ENCODE measurements at regions of chr5 and their contacts with region 1.

Region 1: GRCh38 chr5:73902327-73903051 is 276.5 kb downstream of the ARHGEF28 start:
- DNase-seq: no peak
- H3K4me3 ChIP-seq: no peak overlapping the region
- H3K27ac ChIP-seq: no peak overlapping the region
- H3K4me1 ChIP-seq: no peaks in the 10 kb centered on the region
- H3K27me3 ChIP-seq: no peaks in the 10 kb centered on the region
- CTCF ChIP-seq: peak; percentile 64 to 93 (median 83)
- POLR2A ChIP-seq: no peak

Region 2: GRCh38 chr5:73654171-73654811 is 248.2 kb before region 1 on chr5:
- intact Hi-C with region 1: no loop called
- DNase-seq: no peak
- H3K4me3 ChIP-seq: no peak overlapping the region
- H3K27ac ChIP-seq: no peak overlapping the region
- H3K4me1 ChIP-seq: peaks cover 9 to 12% of the 10 kb centered on the region in 2 donors
- H3K27me3 ChIP-seq: no peaks in the 10 kb centered on the region
- CTCF ChIP-seq: no peak
- POLR2A ChIP-seq: no peak

Region 3: DNA sequence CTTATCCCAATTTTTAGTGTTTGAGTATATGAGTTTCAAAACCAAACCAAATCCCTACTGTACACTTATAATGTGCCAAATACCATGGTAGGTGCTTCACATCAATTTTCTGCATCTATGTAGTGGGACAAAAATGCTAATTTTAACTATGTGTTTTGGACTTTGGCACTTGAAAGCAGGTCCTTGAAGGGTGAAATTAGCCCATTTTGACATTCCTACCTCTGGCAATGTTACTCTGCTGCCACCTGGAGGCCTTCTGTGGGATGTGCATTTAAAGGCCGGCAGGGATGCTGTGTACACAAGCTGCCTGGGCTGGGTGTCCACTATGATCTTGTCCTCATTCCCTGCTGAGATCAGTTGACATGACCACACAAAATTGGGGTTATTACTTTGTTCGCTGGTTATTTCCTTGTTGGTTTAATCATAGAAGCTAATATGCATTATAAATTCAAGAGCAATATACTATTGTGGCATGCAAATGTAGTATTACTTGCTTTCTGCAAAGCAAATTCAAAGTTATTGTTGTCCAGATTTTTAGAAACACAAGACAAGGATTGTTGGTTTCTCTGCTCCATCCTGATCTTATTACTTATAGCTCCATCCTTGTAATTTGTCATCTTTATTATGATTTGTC is 109.7 kb before region 1 on chr5:
- intact Hi-C with region 1: no loop called
- DNase-seq: peak; percentile 78
- H3K4me3 ChIP-seq: no peak overlapping the region
- H3K27ac ChIP-seq: no peak overlapping the region
- H3K4me1 ChIP-seq: peaks cover 7 to 16% of the 10 kb centered on the region in 2 donors
- H3K27me3 ChIP-seq: no peaks in the 10 kb centered on the region
- CTCF ChIP-seq: peak; percentile 91 to 99 (median 97)
- POLR2A ChIP-seq: no peak

Region 4: GRCh38 chr5:73960023-73960422 is 57.5 kb after region 1 on chr5:
- intact Hi-C with region 1: no loop called
- DNase-seq: no peak
- H3K4me3 ChIP-seq: no peak overlapping the region
- H3K27ac ChIP-seq: no peak overlapping the region
- H3K4me1 ChIP-seq: no peaks in the 10 kb centered on the region
- H3K27me3 ChIP-seq: no peaks in the 10 kb centered on the region
- CTCF ChIP-seq: no peak
- POLR2A ChIP-seq: no peak

Region 5: DNA sequence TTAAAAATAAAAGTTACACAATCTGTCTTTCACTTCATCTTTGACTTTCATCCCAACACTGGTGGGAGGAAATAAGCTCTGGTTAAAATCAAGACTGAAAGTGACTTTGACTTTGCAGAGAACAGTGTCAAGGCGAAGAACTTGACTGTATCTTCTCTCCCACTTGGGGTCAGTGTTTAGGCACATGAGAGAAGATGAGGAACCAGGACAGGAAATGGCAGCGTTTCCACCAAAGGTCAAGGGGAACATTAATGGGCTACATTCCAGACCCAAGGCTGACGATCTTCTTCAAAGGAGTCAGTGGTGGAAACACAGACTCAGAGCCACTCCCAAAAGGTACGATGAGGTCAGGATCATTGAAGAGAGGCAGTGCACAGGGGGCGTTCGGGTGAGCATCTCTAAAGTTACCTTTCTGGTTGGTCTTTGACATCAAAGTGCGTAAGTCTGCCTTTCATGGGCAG is 133.1 kb after region 1 on chr5:
- intact Hi-C with region 1: loop called (anchors 10 kb)
- DNase-seq: peak; percentile 24 to 25
- H3K4me3 ChIP-seq: no peak overlapping the region
- H3K27ac ChIP-seq: no peak overlapping the region
- H3K4me1 ChIP-seq: peaks cover 11 to 19% of the 10 kb centered on the region in 2 donors
- H3K27me3 ChIP-seq: no peaks in the 10 kb centered on the region
- CTCF ChIP-seq: peak in 4 of 6 experiments; percentile 21 to 66 (median 44)
- POLR2A ChIP-seq: no peak

Region 6: DNA sequence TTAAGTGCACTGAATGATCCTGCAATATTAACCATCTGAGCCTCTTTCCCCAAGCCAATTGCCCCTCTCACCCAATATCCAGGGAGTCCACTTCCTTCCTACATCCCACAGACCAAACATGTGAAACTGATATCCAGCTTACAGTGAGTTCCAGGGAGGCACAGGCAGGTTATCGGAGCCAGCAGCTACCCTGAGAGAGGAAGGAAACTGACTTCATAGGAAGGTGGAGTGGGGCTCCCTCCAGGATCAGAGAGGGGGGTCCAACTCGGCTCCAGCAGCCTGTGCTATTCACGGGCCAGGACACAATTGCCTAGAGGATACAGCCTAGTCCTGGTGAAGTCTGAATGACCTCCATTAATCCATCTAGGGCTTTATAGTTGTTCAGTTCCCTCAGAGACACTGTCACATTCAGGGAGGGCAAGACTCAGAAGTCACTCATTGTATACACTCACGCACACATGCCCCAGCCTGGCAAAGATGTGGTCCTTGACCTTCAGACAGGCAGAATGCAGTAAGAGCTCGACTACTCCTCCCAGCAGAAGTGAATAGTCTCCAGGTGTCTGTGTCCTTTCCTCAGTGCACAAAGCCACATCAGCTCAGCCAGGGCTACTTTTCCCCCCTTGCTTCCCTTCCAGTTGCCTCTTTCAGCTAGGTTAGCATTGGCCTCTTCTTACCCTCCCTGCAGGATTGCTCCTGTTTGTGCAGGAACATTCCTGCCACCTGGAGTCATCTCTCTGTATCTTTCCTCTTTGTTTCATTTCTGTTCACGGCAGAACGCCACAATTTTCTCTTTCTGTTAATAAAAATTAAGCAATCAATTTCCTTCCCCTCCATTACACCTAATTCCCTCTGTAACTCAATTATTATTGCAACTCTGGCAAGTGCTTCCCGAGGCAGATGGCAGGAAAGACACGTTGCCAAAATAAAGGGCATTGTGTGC is 225.2 kb after region 1 on chr5:
- intact Hi-C with region 1: loop called (anchors 10 kb)
- DNase-seq: peak; percentile 35 to 44
- H3K4me3 ChIP-seq: no peak overlapping the region
- H3K27ac ChIP-seq: peak overlapping the region in 1 of 3 donors; percentile 43
- H3K4me1 ChIP-seq: peaks cover 0 to 23% of the 10 kb centered on the region in 2 donors
- H3K27me3 ChIP-seq: no peaks in the 10 kb centered on the region
- CTCF ChIP-seq: peak in 5 of 6 experiments; percentile 11 to 78 (median 45)
- POLR2A ChIP-seq: no peak

Region 7: GRCh38 chr5:74648835-74649293 is 746.4 kb after region 1 on chr5:
- intact Hi-C with region 1: loop called (anchors 5 kb)
- DNase-seq: peak; percentile 14 to 25
- H3K4me3 ChIP-seq: no peak overlapping the region
- H3K27ac ChIP-seq: no peak overlapping the region
- H3K4me1 ChIP-seq: peaks cover 0 to 11% of the 10 kb centered on the region in 2 donors
- H3K27me3 ChIP-seq: no peaks in the 10 kb centered on the region
- CTCF ChIP-seq: peak in 5 of 6 experiments; percentile 65 to 92 (median 73)
- POLR2A ChIP-seq: no peak